Dorsolateral prefrontal cortex (tissue), 120 donors: ENCODE measurements at regions of chr10 and their contacts with region 1.

Region 1: DNA sequence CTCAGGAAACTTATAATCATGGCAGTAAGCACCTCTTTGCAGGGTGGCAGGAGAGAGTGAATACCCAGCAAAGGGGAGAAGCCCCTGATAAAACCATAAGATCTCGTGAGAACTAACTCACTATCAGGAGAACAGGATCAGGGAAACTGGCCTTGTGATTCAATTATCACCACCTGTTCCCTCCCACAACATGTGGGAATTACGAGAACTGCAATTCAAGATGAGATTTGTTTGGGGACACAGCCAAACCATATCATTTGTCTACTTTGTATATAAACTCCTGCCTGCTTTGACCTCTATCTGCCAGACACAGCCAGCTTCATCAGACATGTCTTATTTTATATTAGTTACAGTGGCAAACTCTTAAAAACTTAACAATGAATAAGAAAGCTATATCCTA is 50.4 kb downstream of the ARMC3 start:
- DNase-seq: no peak
- H3K4me3 ChIP-seq: no peak overlapping the region
- H3K27ac ChIP-seq: peak overlapping the region in 41 of 59 donors; percentile 2 to 85 (median 46)
- H3K27me3 ChIP-seq: no peaks in the 10 kb centered on the region
- CTCF ChIP-seq: peak in 1 of 56 donors; percentile 0

Region 2: DNA sequence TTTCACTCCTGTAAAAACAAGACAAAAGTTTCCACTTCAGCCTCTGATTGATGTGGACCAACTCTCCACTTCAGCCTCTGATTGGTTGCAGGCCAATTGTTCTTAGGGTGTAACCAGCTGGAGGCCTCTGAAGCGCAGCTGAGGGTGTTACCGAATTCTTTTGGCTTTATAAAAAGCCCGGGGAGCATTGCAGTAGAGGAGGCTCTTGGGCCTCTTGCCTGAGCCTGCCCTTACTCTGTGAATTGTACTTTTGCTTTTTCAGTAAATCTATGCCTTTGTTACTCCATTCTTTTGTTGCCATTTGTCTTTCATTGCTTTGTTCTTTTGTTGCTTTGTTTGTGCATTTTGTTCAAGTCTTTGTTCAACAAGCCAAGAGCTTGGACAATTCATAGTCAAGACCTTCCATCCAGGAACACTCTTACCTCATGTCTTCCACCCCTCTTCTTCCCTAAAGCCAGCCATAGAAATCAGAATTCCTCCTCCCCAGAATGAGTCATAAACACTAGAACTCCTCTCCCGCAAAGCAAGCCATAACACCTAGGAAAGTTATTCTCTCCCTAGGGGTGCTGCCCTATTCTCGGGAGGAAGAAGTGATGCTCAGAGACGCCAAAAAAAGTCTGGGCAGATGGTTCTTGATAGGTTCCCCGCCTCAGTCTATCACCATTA is 104.0 kb before region 1 on chr10:
- intact Hi-C with region 1: loop called in 1 of 2 experiments (anchors 10 kb)
- DNase-seq: peak in 3 of 10 donors; percentile 44 to 62 (median 59)
- H3K4me3 ChIP-seq: no peak overlapping the region
- H3K27ac ChIP-seq: peak overlapping the region; percentile 53 to 98 (median 89)
- H3K27me3 ChIP-seq: no peaks in the 10 kb centered on the region
- CTCF ChIP-seq: peak in 2 of 56 donors; percentile 9 to 32

Region 3: GRCh38 chr10:22958338-22958737 is 19.9 kb before region 1 on chr10:
- intact Hi-C with region 1: no loop called
- DNase-seq: no peak
- H3K4me3 ChIP-seq: no peak overlapping the region
- H3K27ac ChIP-seq: no peak overlapping the region
- H3K27me3 ChIP-seq: no peaks in the 10 kb centered on the region
- CTCF ChIP-seq: no peak

Region 4: GRCh38 chr10:23053036-23053435 is 74.7 kb after region 1 on chr10:
- intact Hi-C with region 1: no loop called
- DNase-seq: no peak
- H3K4me3 ChIP-seq: no peak overlapping the region
- H3K27ac ChIP-seq: no peak overlapping the region
- H3K27me3 ChIP-seq: peaks cover 0 to 2% (median 0%) of the 10 kb centered on the region in 45 donors
- CTCF ChIP-seq: no peak